Endothelial cell of umbilical vein (primary cell): ENCODE measurements at regions of chr3 and their contacts with region 1.

Region 1: GRCh38 chr3:151864423-151865101 is 8.9 kb upstream of the SUCNR1 start:
- DNase-seq: peak; percentile 84
- H3K4me3 ChIP-seq: peak overlapping the region in 1 of 3 experiments; percentile 17
- H3K27ac ChIP-seq: peak overlapping the region; percentile 66
- H3K4me1 ChIP-seq: peaks cover 31% of the 10 kb centered on the region
- H3K27me3 ChIP-seq: no peaks in the 10 kb centered on the region
- CTCF ChIP-seq: no peak
- POLR2A ChIP-seq: no peak

Region 2: GRCh38 chr3:151903501-151903991 is 39.0 kb after region 1 on chr3:
- CTCF ChIA-PET with region 1: no interaction called
- POLR2A ChIA-PET with region 1: no interaction called
- dilution Hi-C with region 1: no loop called
- intact Hi-C with region 1: loop called (anchors 1 kb)
- DNase-seq: peak; percentile 93
- H3K4me3 ChIP-seq: no peak overlapping the region
- H3K27ac ChIP-seq: peak overlapping the region; percentile 65
- H3K4me1 ChIP-seq: peaks cover 39% of the 10 kb centered on the region
- H3K27me3 ChIP-seq: no peaks in the 10 kb centered on the region
- CTCF ChIP-seq: no peak
- POLR2A ChIP-seq: no peak

Region 3: GRCh38 chr3:151909681-151910405 is 45.3 kb after region 1 on chr3:
- CTCF ChIA-PET with region 1: no interaction called
- POLR2A ChIA-PET with region 1: no interaction called
- dilution Hi-C with region 1: no loop called
- intact Hi-C with region 1: loop called (anchors 2 kb)
- DNase-seq: peak; percentile 91
- H3K4me3 ChIP-seq: no peak overlapping the region
- H3K27ac ChIP-seq: peak overlapping the region; percentile 71
- H3K4me1 ChIP-seq: peaks cover 21% of the 10 kb centered on the region
- H3K27me3 ChIP-seq: no peaks in the 10 kb centered on the region
- CTCF ChIP-seq: no peak
- POLR2A ChIP-seq: no peak

Region 4: DNA sequence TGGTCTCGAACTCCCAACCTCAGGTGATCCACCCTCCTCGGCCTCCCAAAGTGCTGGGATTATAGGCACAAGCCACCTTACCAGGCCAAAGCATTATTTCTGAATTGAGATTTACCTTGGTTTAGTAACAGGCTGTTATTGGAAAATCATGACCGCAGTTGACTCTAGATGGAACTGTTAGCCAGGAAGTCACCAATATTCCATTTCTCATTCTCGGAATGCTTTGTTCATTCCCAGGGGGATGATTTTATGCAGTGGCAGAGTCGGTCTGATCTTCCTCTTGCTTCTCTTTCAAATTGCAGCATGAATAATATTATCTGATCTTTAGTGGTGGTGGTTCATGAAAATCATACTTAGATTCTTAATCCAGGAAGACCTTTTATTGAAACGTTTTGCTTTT is 208.7 kb after region 1 on chr3:
- CTCF ChIA-PET with region 1: no interaction called
- POLR2A ChIA-PET with region 1: no interaction called
- dilution Hi-C with region 1: no loop called
- intact Hi-C with region 1: no loop called
- DNase-seq: peak; percentile 46
- H3K4me3 ChIP-seq: no peak overlapping the region
- H3K27ac ChIP-seq: no peak overlapping the region
- H3K4me1 ChIP-seq: peaks cover 4% of the 10 kb centered on the region
- H3K27me3 ChIP-seq: no peaks in the 10 kb centered on the region
- CTCF ChIP-seq: no peak
- POLR2A ChIP-seq: no peak